GM10248 (cell line): ENCODE measurements at regions of chr3 and their contacts with region 1.

Region 1: GRCh38 chr3:4597204-4597985 is 104.2 kb downstream of the ITPR1 start:
- DNase-seq: no peak
- CTCF ChIP-seq: no peak

Region 2: GRCh38 chr3:4587061-4587837 is 10.1 kb before region 1 on chr3:
- CTCF ChIA-PET with region 1: interaction called, 7 read pairs
- POLR2A ChIA-PET with region 1: interaction called, 11 read pairs
- DNase-seq: no peak
- CTCF ChIP-seq: no peak

Region 3: DNA sequence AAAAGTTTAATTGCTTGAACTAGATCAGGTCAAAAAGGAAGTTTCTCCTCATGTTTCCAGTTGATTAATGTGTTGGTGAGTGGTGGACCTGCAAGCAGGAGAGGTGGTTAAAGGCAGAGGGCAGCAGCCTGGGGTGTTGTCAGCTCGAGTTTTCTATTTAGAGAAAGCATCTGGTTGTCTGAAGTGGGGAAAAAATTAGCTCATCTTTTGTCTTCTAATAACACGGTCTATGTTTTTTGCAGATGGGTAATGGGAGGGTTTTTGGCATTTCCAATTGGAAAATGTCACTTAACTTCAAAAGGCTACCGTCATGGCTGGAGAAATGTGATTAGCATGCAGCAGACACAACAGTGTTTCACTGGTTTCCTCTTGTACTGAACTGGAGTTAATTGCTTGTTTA is 18.4 kb after region 1 on chr3:
- CTCF ChIA-PET with region 1: no interaction called
- POLR2A ChIA-PET with region 1: no interaction called
- DNase-seq: no peak
- CTCF ChIP-seq: no peak